ENCODE measurements at regions of chr7 and their contacts with region 1.

Region 1: DNA sequence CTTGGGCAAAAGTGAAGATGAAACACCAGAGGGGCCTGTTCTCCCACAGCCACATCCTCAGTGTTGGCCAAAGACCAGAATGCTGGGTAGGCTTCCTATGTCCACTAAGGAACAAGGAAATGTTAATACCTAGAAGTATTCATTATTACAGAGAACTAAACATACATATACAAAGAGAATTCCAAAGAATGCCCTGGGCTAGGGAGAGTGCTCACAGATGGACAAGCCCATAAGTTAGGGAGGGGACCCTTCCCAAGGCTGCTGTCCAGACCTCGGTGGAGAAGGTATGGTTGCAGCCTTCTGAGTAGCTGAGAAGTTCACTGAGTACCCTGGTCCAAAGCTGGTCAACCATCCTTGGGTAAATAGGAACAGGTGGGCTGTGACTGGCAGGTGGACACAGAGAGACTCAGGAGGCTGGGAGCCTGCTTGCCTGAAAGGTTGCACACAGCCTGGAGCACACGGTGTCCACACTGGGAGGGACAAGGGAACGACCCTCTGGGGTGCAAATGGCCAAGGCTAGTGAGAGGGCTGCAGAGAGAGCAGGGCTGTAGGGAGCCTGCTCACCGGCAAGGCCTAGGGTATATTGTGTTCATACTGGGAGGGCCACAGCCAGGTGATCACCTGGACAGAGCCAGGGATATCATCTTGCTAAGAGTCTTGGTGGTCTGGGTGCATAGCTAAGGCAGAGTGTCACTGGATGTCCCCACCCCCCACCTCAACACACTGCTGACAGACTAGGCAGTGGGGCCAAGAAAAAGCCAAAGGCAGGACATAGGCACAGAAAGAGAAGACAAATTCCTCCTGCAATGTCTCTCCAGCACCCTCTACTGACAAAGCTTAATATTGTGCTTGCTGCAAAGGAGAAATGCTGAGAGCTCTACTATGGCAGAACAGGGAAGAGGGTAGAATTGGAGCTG is 40.3 kb downstream of the CPVL start:
- DNase-seq: peak; percentile 54
- H3K4me3 ChIP-seq: no peak overlapping the region
- H3K27ac ChIP-seq: no peak overlapping the region
- H3K4me1 ChIP-seq: peaks cover 21% of the 10 kb centered on the region
- H3K27me3 ChIP-seq: no peaks in the 10 kb centered on the region
- CTCF ChIP-seq: peak; percentile 89 to 93

Region 2: DNA sequence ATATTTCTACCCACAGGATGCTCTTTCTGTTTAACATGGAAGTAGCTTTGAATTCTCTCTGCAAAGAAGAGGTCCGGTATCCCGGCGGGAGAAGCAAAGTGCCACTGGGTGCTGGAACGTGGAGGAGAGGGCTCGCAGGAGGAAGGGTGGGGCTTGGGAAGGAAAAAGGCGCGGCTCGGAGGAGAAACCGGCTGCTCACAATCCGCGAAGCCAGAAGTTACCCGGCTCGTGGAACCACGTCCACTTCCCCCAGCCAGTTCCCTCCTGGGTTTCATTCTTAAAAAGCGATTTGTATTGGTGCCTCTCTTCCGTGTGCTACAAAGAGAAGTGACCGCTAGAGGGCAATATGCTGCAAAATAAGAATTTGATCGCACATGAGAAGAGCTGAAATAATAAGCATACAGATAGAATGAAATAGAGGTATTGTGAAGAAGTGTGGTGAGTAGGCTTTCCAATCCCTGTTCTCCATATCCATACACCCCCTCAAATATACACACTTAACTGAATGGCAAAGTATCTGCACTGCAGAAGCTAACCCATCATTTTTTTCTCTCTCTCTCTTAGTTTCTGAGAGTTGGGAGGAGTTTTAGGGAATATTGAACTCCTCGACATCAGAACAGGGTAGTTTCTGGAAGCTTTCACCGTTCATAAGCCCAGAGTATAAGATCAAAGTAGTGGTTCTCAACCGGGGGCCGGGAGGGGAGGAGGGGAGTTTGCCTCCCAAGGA is 179.0 kb before region 1 on chr7:
- CTCF ChIA-PET with region 1: interaction called, 23 read pairs
- dilution Hi-C with region 1: loop called (anchors 5 kb)
- in situ Hi-C with region 1: loop called (anchors 5 kb)
- intact Hi-C with region 1: loop called (anchors 1 kb)
- DNase-seq: peak; percentile 74
- H3K4me3 ChIP-seq: peak overlapping the region; percentile 52 to 59 (median 58)
- H3K27ac ChIP-seq: no peak overlapping the region
- H3K4me1 ChIP-seq: peaks cover 5% of the 10 kb centered on the region
- H3K27me3 ChIP-seq: no peaks in the 10 kb centered on the region
- CTCF ChIP-seq: peak; percentile 76 to 77

Region 3: DNA sequence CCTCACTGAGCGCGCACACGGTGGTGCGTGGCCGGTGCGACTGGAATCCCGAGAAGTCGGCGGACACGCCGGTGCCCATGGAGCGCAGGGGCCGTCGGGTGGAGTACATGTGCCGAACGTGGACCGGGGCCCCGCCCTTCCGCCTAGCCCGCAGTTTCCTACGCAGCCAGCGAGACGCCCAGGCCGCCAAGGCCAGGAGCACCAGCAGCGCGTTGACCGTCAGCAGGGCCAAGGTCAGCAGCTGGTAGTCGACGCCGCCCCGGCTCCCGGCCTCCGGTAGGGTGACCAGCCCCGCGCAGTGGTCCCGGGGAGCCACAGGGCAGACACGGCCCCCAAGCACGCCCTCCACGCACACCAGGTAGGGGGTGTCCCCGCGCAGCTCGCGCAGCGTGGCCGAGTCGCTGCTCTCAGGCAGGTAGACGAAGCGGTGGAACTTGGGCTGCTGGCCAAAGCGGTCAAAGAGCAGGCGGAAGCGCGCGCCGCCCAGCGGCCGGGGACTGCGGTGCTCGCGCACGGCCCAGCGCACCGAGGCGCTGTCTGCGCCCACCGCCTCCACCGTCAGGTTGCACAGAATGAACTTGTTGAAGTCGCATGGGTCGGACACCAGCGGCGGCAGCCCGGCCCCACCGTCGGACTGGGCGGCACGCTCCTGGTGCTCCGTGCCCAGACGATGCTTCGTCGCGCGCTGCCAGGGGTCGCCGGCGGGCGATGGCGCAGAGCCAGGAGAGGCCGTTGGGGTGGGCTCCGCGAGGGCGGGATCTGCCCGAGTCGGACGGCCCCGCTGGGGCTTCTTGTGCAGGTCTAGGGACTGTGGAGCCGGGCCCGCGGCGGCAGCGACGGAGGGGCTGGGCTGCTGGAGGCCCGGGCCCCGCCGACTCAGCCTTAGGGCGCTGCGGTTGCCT is 150.0 kb before region 1 on chr7:
- CTCF ChIA-PET with region 1: interaction called, 47 read pairs
- dilution Hi-C with region 1: no loop called
- in situ Hi-C with region 1: loop called in 1 of 2 experiments (anchors 5 kb)
- intact Hi-C with region 1: loop called (anchors 1 kb)
- DNase-seq: peak; percentile 35
- H3K4me3 ChIP-seq: peak overlapping the region; percentile 15 to 47 (median 38)
- H3K27ac ChIP-seq: no peak overlapping the region
- H3K4me1 ChIP-seq: peaks cover 23% of the 10 kb centered on the region
- H3K27me3 ChIP-seq: peaks cover 35% of the 10 kb centered on the region
- CTCF ChIP-seq: peak; percentile 57 to 77

Region 4: DNA sequence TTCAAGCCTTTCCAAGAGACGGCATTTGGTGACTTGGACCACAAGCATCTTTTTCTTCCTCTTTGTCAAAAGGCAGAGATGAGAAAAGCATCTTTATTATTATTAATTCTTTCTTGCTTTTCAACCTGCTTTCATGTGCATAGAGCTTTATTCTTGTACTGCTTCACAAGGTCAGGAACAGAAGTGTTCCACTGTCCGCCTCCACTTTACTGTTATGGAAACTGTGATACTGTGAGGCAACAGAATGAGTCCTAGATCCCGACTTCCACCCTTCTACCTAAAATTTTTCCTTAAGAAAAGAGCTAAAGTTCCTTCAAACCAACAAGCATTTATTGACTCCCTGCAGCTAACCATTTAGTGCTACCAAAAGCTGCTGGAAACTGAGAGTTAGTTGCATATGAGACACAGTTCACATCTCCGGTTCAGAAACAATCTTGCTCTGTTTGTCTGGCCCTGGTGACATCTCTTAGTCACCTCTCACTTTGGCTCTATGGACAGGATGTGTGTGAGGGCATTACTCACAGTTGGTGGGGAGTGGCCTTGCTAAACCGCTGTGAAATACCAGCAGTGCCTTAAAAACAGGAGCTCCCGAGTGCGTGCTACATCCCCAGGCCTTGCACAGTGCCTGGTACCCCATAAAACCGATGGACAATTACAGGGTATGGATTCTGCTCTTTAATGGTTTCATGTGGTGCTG is 70.8 kb before region 1 on chr7:
- CTCF ChIA-PET with region 1: no interaction called
- dilution Hi-C with region 1: no loop called
- in situ Hi-C with region 1: no loop called
- intact Hi-C with region 1: no loop called
- DNase-seq: peak; percentile 83
- H3K4me3 ChIP-seq: no peak overlapping the region
- H3K27ac ChIP-seq: no peak overlapping the region
- H3K4me1 ChIP-seq: peaks cover 10% of the 10 kb centered on the region
- H3K27me3 ChIP-seq: no peaks in the 10 kb centered on the region
- CTCF ChIP-seq: no peak

Region 5: DNA sequence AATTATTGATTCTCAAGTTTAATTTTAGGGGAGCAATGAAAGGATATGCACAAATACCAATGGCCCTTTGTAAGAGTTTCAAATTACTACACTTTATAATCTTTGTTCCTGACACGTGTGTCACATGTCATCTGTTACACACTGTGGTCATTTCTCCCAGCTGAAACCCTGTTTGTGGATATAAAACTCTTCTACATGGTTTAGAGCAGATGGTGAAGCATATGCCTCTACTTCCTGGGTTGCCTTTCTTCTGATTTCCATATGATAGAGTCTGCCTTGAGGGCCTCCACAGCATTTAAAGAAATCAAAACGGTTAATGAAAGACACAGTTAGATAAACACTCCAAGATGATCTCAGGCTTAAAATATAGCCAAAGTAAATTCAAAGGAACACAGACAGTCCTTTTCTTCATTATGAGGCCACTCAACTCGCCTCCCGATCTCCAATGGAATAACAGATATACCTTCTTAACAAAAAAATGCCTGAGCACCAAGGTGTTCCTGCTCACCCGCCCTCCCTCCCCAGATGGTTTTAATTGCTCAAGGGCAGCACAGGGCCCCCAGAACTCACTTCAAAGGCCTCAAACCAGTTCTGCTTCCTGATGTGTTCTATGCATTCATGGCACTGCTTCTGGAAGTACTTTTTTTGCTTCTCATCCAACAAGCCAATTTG is 34.7 kb before region 1 on chr7:
- CTCF ChIA-PET with region 1: no interaction called
- dilution Hi-C with region 1: no loop called
- in situ Hi-C with region 1: no loop called
- intact Hi-C with region 1: no loop called
- DNase-seq: no peak
- H3K4me3 ChIP-seq: no peak overlapping the region
- H3K27ac ChIP-seq: no peak overlapping the region
- H3K4me1 ChIP-seq: no peaks in the 10 kb centered on the region
- H3K27me3 ChIP-seq: peaks cover 6% of the 10 kb centered on the region
- CTCF ChIP-seq: no peak

Region 6: DNA sequence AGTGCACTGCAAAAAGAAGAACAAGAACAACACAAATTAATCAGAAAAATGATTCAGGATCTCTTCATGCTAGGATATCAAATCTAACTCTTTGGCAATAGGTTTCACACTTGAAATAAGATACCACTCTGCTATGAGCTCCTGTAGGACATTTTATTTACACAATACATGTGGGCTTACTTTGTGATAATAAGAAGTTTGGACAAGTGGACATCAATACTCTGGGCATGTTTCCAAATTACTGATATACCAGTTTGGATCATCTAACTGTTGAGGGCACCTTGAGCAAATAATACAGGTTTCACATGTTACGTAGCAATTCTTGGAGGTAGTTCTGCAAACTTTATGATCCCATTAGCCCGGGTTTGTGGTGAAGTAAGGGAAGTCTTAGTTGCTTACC is 19.5 kb before region 1 on chr7:
- CTCF ChIA-PET with region 1: interaction called, 23 read pairs
- dilution Hi-C with region 1: no loop called
- in situ Hi-C with region 1: no loop called
- intact Hi-C with region 1: no loop called
- DNase-seq: no peak
- H3K4me3 ChIP-seq: no peak overlapping the region
- H3K27ac ChIP-seq: no peak overlapping the region
- H3K4me1 ChIP-seq: peaks cover 7% of the 10 kb centered on the region
- H3K27me3 ChIP-seq: no peaks in the 10 kb centered on the region
- CTCF ChIP-seq: no peak

Region 7: GRCh38 chr7:29609162-29610037 is 503.4 kb after region 1 on chr7:
- CTCF ChIA-PET with region 1: no interaction called
- dilution Hi-C with region 1: no loop called
- in situ Hi-C with region 1: no loop called
- intact Hi-C with region 1: loop called (anchors 10 kb)
- DNase-seq: peak; percentile 79
- H3K4me3 ChIP-seq: no peak overlapping the region
- H3K27ac ChIP-seq: no peak overlapping the region
- H3K4me1 ChIP-seq: peaks cover 55% of the 10 kb centered on the region
- H3K27me3 ChIP-seq: no peaks in the 10 kb centered on the region
- CTCF ChIP-seq: peak; percentile 86 to 94

Measured in mammary epithelial cell (primary cell).